Activated CD8-positive, alpha-beta memory T cell treated with anti-CD3 and anti-CD28 coated beads, Interleukin-2, amount 10 ng/mL, durations not matched to agents 7 days and 5 days (primary cell): ENCODE measurements at regions of chr1 and their contacts with region 1.

Region 1: DNA sequence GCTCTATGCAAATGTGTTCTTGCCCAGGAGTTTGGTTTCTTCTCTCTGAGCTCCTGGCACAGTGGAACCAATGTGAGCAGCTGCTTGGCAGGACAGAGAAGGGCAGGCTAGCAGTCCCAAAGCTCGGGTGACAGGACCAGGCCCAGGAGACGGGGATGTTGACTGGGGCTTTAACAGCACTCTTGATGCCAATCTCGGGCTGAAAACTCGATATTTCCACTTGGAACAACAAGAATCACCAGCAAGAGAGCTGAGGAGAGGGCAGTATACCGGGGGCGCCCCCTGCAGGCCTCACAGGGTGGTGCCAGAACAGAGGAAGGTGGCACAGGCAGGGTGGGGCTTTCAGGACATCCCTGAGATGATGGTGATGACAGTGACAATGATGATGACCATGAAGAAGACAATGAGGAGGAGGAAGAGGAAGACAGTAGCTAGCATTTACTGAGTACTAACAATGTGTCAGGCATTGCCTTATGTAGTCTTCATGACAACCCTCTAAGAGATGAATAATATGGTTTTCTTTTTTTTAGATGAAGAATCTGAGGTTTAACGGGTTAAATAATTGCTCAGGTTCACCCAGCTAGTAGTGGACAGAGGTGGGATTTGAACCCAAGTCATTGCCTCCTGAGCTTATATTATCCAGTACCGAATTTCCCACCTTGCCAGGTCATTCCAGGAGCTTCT is 2.7 kb upstream of the KCNJ9 start:
- DNase-seq: peak; percentile 77
- ATAC-seq: peak; percentile 89
- H3K4me3 Mint-ChIP-seq: no peak overlapping the region
- H3K27ac Mint-ChIP-seq: no peak overlapping the region
- H3K4me1 Mint-ChIP-seq: peaks cover 4% of the 10 kb centered on the region
- H3K27me3 Mint-ChIP-seq: peaks cover 60% of the 10 kb centered on the region

Region 2: GRCh38 chr1:160031365-160032164 is 47.1 kb before region 1 on chr1 and contains the start of gene PIGM:
- CTCF ChIA-PET with region 1: interaction called, 26 read pairs
- DNase-seq: peak; percentile 97
- ATAC-seq: peak; percentile 99
- H3K4me3 Mint-ChIP-seq: peak within 1 kb of the TSS; percentile 87
- H3K27ac Mint-ChIP-seq: peak within 1 kb of the TSS; percentile 85
- H3K4me1 Mint-ChIP-seq: peaks cover 27% of the 10 kb centered on the region
- H3K27me3 Mint-ChIP-seq: no peaks in the 10 kb centered on the region
- total RNA-seq, gene PIGM: 5.3 to 5.9 TPM

Region 3: GRCh38 chr1:160108888-160109662 is 30.4 kb after region 1 on chr1:
- CTCF ChIA-PET with region 1: interaction called, 10 read pairs
- DNase-seq: peak; percentile 63
- ATAC-seq: peak; percentile 42
- H3K4me3 Mint-ChIP-seq: no peak overlapping the region
- H3K27ac Mint-ChIP-seq: peak overlapping the region; percentile 20
- H3K4me1 Mint-ChIP-seq: peaks cover 3% of the 10 kb centered on the region
- H3K27me3 Mint-ChIP-seq: no peaks in the 10 kb centered on the region

Region 4: DNA sequence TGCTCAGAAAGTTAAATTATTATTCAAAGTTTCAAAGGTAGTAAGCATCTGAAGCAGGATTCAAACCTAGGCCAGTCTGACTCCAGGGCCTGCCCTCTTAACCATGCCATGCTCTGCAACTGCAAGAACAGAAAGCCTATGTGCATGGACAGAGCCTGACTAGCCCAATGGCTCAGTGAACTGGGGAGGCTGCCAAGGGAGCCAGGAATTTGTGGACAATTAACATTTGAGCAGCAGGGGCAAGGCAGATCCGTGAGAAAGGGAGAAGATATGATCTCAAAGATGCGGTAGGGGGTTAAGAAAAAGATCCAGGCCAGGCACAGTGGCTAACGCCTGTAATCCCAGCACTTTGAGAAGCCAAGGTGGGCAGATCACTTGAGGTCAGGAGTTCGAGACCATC is 66.3 kb after region 1 on chr1:
- CTCF ChIA-PET with region 1: no interaction called
- DNase-seq: no peak
- ATAC-seq: no peak
- H3K4me3 Mint-ChIP-seq: no peak overlapping the region
- H3K27ac Mint-ChIP-seq: no peak overlapping the region
- H3K4me1 Mint-ChIP-seq: no peaks in the 10 kb centered on the region
- H3K27me3 Mint-ChIP-seq: peaks cover 37% of the 10 kb centered on the region